Calu3 (cell line): ENCODE measurements at regions of chr5 and their contacts with region 1.

Region 1: GRCh38 chr5:64811050-64811640 is 42.4 kb downstream of the CWC27 start:
- DNase-seq: peak; percentile 7
- H3K4me3 Mint-ChIP-seq: no peak overlapping the region
- H3K27ac Mint-ChIP-seq: no peak overlapping the region
- H3K4me1 Mint-ChIP-seq: peaks cover 13% of the 10 kb centered on the region
- H3K27me3 Mint-ChIP-seq: no peaks in the 10 kb centered on the region
- CTCF ChIP-seq: peak; percentile 27

Region 2: GRCh38 chr5:64939522-64940510 is 128.7 kb after region 1 on chr5:
- CTCF ChIA-PET with region 1: interaction called, 6 read pairs
- intact Hi-C with region 1: loop called (anchors 2 kb)
- DNase-seq: peak; percentile 72
- H3K4me3 Mint-ChIP-seq: peak overlapping the region; percentile 56
- H3K27ac Mint-ChIP-seq: peak overlapping the region; percentile 16
- H3K4me1 Mint-ChIP-seq: peaks cover 11% of the 10 kb centered on the region
- H3K27me3 Mint-ChIP-seq: no peaks in the 10 kb centered on the region
- CTCF ChIP-seq: no peak

Region 3: DNA sequence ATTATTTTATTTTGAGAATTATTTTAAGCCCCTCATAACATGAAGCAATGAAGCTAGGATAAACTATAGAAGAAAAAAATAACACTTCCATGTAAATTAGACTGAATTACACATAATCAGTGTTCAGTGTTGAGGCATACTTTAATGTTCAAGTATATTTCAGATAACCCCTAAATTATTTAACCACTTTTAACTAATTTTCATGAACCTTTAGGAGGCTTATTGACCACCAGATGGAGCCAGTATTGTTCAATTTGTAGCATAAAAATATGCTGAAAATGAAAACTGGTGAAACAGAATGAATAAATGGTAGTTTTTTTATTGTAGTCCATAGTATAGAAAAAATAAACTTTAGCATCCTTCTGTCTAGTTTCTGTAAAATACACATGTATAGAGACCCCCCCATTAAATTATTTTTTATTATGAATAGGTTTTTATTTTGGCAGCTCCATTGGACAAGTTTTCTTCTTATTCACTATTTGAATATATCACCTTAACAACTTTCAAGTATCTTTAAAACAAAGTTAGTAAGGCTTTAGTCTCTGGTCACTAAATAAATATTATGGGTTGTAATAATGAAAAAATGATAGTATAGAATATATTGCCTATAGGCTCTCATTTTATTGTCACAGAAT is 147.7 kb after region 1 on chr5:
- CTCF ChIA-PET with region 1: no interaction called
- intact Hi-C with region 1: no loop called
- DNase-seq: no peak
- H3K4me3 Mint-ChIP-seq: no peak overlapping the region
- H3K27ac Mint-ChIP-seq: no peak overlapping the region
- H3K4me1 Mint-ChIP-seq: no peaks in the 10 kb centered on the region
- H3K27me3 Mint-ChIP-seq: no peaks in the 10 kb centered on the region
- CTCF ChIP-seq: peak; percentile 26

Region 4: GRCh38 chr5:65035211-65036206 is 224.4 kb after region 1 on chr5:
- CTCF ChIA-PET with region 1: no interaction called
- intact Hi-C with region 1: loop called (anchors 5 kb)
- DNase-seq: peak; percentile 93
- H3K4me3 Mint-ChIP-seq: peak overlapping the region; percentile 87
- H3K27ac Mint-ChIP-seq: peak overlapping the region; percentile 68
- H3K4me1 Mint-ChIP-seq: peaks cover 8% of the 10 kb centered on the region
- H3K27me3 Mint-ChIP-seq: no peaks in the 10 kb centered on the region
- CTCF ChIP-seq: no peak

Region 5: DNA sequence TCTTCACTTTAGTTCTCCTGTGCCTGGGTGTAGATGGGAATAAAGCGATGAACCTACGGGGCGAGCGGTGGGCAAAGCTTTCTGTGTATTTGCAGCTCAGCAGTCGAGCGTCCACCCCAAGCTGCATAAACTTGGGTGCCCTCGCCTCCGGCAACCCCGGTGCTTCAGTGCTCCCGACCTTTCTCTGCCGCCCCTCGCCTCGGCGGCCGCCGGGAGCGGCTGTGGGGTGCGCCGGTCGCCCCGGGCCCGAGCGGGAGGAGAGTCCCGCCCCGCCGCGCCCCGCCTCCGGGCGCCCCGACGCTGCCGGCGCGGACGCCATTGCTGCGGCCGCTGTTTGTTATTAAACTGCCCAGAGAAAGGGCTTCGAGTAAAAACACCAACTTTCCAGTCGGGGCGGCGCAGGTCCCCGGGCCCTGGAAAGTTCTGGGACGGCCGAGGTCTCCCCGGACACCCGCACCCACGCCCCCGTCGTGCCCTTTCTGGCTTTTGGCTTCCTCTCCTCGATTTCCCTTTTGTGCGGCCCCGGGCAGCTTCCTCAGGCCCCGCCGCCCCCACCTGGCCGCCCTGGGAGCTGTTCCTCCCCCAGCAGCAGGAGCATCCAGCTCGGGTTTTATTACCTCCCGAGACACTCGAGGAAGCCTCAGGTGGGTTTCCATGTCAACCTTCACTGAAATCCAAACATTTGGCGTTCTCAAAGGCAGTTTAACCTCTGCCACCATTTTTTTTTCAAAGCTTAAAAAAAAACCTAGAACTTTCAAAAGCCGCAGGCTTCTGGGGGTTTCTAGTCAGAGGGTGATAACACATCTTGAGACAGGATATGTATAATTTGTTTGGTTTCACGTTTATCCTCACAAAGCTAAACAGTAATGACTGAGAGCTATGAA is 291.9 kb after region 1 on chr5:
- CTCF ChIA-PET with region 1: no interaction called
- intact Hi-C with region 1: loop called (anchors 10 kb)
- DNase-seq: peak; percentile 71
- H3K4me3 Mint-ChIP-seq: peak overlapping the region; percentile 68
- H3K27ac Mint-ChIP-seq: peak overlapping the region; percentile 71
- H3K4me1 Mint-ChIP-seq: no peaks in the 10 kb centered on the region
- H3K27me3 Mint-ChIP-seq: no peaks in the 10 kb centered on the region
- CTCF ChIP-seq: peak; percentile 29

Region 6: DNA sequence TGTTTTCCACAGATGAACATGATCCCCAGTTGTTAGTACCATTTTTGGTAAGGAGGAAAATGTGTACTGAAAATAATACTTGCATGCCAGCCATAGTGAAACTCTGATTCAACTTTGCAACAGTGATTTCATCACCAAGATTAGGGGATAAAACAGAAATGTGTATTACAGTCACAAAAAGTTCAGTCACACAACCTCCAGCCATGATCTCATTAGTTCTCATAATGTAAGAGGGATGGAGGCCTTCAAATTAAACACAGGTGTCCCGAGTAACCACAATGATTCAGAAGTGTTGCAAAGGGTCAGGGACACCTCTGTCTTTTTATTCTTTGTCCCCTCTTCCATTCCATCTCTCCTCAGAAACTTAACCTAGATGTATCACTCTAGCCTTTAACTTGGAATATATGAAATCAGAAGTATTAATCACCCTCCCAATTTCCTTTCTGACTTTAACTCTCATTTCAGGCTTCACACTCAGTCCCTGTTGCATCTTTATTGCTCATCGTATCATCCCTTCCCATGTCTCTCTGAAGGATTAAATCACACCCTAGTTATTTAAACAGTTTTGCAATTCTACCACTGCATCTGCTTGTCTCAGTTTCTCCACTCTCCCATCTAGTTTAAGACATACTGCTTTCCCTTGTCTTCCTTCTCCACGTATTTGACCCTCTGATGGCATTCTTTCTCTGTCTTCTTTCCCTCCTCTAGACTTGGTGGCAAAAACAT is 379.3 kb after region 1 on chr5:
- CTCF ChIA-PET with region 1: no interaction called
- intact Hi-C with region 1: loop called (anchors 10 kb)
- DNase-seq: no peak
- H3K4me3 Mint-ChIP-seq: no peak overlapping the region
- H3K27ac Mint-ChIP-seq: no peak overlapping the region
- H3K4me1 Mint-ChIP-seq: no peaks in the 10 kb centered on the region
- H3K27me3 Mint-ChIP-seq: no peaks in the 10 kb centered on the region
- CTCF ChIP-seq: no peak